Left lung (tissue), 14 donors: ENCODE measurements at regions of chrX and their contacts with region 1.

Region 1: GRCh38 chrX:31213941-31214340 is 142.1 kb upstream of the FTHL17 start:
- DNase-seq: no peak
- ATAC-seq: peak; percentile 38
- H3K4me3 ChIP-seq: no peak overlapping the region
- H3K27ac ChIP-seq: no peak overlapping the region
- H3K4me1 ChIP-seq: no peaks in the 10 kb centered on the region
- H3K27me3 ChIP-seq: no peaks in the 10 kb centered on the region
- CTCF ChIP-seq: no peak

Region 2: GRCh38 chrX:31658360-31658759 is 444.4 kb after region 1 on chrX:
- intact Hi-C with region 1: loop called in 1 of 2 experiments (anchors 10 kb)
- DNase-seq: peak in 2 of 4 donors; percentile 4 to 14
- ATAC-seq: peak; percentile 34
- H3K4me3 ChIP-seq: no peak overlapping the region
- H3K27ac ChIP-seq: no peak overlapping the region
- H3K4me1 ChIP-seq: no peaks in the 10 kb centered on the region
- H3K27me3 ChIP-seq: no peaks in the 10 kb centered on the region
- CTCF ChIP-seq: peak; percentile 13 to 46